HepG2 (cell line): ENCODE measurements at regions of chr3 and their contacts with region 1.

Region 1: DNA sequence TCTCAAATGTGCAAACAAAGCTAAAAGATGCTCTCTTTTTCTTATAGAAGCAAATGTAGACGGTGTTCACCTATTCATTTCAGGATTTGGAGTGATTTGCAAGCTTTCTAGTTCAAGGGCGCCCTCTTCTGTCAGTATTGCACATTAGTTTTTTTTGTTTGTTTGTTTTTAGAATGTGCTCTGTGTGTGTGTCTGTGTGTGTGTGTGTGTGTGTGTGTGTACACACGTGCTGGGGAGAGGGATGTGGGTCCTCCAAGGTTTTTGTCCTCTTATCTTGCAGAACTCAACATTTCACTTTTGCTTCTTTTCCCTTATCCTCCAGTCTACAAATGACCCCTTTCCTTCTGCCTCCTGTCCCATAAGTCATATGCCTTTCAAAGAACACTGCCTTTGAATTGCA is 23.5 kb downstream of the DNAH1 start:
- DNase-seq: peak; percentile 85
- ATAC-seq: no peak; the same call in 1 of the 3 replicates
- H3K4me3 ChIP-seq: no peak overlapping the region
- H3K27ac ChIP-seq: no peak overlapping the region
- H3K4me1 ChIP-seq: peaks cover 7% of the 10 kb centered on the region
- H3K27me3 ChIP-seq: no peaks in the 10 kb centered on the region
- CTCF ChIP-seq: peak; percentile 87
- EP300 ChIP-seq: no peak
- POLR2A ChIP-seq: no peak
- RAD21 ChIP-seq: peak; percentile 88

Region 2: GRCh38 chr3:52220380-52221026 is 119.1 kb before region 1 on chr3:
- CTCF ChIA-PET with region 1: interaction called, 15 read pairs
- POLR2A ChIA-PET with region 1: no interaction called
- in situ Hi-C with region 1: no loop called
- intact Hi-C with region 1: loop called (anchors 5 kb)
- DNase-seq: peak; percentile 49
- ATAC-seq: peak; percentile 78
- H3K4me3 ChIP-seq: peak overlapping the region in 1 of 3 experiments; percentile 6; a peak in 1 of 6 replicates
- H3K27ac ChIP-seq: no peak overlapping the region
- H3K4me1 ChIP-seq: peaks cover 45% of the 10 kb centered on the region
- H3K27me3 ChIP-seq: peaks cover 1 to 12% of the 10 kb centered on the region in 2 experiments; a peak in 4 of 5 replicates
- CTCF ChIP-seq: peak; percentile 94
- EP300 ChIP-seq: no peak
- POLR2A ChIP-seq: no peak
- RAD21 ChIP-seq: peak; percentile 73

Region 3: DNA sequence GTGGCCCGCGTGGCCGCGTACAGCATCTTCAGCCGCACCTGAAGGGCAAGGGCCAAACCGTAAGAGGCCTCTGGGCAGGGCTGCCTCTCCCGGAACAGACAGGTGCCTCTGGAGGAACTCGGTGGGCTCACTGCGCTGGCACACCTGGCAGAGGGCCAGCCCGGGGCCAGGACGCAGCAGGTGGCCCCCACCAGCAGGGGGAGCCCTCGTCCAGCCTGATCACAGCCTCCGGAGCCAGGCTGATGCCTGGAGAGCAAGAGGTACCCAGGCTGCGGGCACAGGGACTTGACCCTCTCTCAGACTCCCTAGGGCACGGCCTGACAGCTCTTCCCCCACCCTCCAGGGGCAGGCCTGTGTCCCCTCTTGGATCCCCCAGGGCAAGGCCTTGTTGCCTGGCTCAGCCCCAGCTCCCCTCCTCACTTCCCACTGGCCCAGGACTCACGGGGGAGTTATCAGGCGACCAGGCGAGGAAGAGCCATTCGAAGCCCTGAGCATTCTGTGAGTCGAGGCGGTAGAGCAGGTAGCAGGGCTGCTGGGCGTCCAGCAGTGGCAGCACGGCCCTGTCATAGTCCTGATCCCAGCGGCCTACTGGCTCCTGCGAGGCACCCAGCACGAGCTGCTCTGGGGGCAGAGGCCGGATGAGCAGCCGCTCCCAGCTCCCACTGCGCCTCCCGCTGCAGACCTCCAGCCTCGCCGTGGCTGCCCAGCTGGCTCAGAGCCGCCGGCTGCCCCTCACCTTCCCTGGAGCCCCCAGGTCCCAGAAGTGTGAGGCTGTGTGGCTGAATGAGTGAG is 107.9 kb before region 1 on chr3:
- CTCF ChIA-PET with region 1: interaction called, 10 read pairs
- POLR2A ChIA-PET with region 1: no interaction called
- in situ Hi-C with region 1: no loop called
- intact Hi-C with region 1: no loop called
- DNase-seq: no peak
- ATAC-seq: peak; percentile 65
- H3K4me3 ChIP-seq: no peak overlapping the region
- H3K27ac ChIP-seq: no peak overlapping the region
- H3K4me1 ChIP-seq: peaks cover 15% of the 10 kb centered on the region
- H3K27me3 ChIP-seq: no peaks in the 10 kb centered on the region
- CTCF ChIP-seq: peak; percentile 91
- EP300 ChIP-seq: no peak
- POLR2A ChIP-seq: no peak
- RAD21 ChIP-seq: peak; percentile 88